Spleen (tissue), 13 donors: ENCODE measurements at regions of chr1 and their contacts with region 1.

Region 1: GRCh38 chr1:19096036-19096833 is 113.8 kb downstream of the UBR4 start:
- DNase-seq: no peak
- H3K4me3 ChIP-seq: no peak overlapping the region
- H3K27ac ChIP-seq: no peak overlapping the region
- H3K4me1 ChIP-seq: peaks cover 0 to 7% (median 0%) of the 10 kb centered on the region in 6 donors
- H3K27me3 ChIP-seq: no peaks in the 10 kb centered on the region
- CTCF ChIP-seq: peak in 9 of 11 experiments; percentile 16 to 60 (median 42)
- POLR2A ChIP-seq: no peak

Region 2: DNA sequence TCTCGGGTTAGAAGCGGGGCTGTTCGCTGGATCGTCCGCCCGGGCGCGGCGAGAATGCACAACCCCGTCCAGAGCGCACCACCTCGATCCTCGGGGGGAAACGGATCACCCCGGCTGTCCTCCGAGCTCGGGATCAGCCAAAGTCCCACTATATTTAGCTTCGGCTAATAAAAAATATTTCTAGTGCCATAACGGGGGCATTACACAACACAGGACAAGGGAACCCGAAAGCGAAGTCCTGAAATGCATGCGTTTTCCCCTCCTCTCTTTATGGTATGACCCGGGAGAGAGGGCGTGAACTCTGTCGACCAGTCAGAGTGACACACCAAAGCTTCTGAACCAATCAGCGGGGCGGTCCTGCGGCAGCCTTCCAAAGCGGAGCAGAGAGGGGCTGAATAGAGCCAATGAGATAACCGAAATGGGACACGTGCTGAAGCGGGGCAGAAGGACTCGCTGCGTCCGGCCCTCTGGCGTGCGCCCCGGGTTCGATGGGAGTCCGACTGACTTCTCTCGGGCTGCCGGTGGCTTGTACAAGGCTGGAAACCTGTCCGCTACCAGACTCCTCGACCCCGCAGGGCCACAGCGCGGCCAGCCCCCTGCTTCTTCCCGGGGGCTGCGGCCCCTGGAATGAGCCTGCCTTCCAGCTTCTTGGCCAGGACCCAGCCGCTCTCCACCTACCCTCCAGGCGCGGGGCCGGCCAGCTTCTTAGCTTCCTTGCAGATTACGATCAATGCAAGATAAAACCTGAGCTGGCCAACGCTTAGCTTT is 193.5 kb before region 1 on chr1 and contains the start of gene ALDH4A1:
- intact Hi-C with region 1: loop called (anchors 10 kb)
- DNase-seq: peak; percentile 98
- H3K4me3 ChIP-seq: peak within 1 kb of the TSS; percentile 64 to 92 (median 88)
- H3K27ac ChIP-seq: peak within 1 kb of the TSS; percentile 76 to 92 (median 87)
- H3K4me1 ChIP-seq: peaks cover 10 to 64% (median 38%) of the 10 kb centered on the region in 6 donors
- H3K27me3 ChIP-seq: no peaks in the 10 kb centered on the region
- CTCF ChIP-seq: peak in 2 of 11 experiments; percentile 9 to 44
- POLR2A ChIP-seq: no peak
- total RNA-seq, gene ALDH4A1: 5.1 to 11.2 (median 8.3) TPM

Region 3: DNA sequence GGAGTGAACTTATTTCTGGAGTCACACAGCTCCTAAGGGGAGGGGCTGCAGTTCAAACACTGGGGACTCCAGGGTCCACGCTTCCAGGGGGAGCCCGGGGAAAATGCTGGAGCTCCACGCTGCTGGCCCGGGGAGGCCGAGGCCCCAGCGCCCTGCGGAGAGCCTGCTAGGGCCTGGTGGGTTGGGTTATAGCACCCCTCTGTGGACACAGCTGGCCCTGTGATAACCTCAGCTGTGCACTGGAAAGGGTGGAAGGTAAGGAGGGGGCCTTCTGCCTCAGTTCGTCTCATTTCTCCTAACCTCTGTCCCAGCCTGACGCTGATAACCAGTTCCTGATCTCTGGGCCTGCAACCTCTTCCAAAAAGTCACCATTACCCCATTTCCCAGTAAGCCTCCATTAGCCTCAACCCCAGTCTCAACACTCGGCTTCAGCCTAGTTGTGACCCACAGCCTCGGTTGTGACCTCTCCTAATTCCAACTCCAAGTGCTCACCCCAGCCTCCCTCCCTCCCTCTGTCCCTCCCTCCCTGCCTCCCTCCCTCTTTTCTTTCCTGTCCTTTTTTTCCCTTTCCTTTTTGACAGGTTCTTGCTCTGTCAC is 555.0 kb after region 1 on chr1:
- intact Hi-C with region 1: no loop called
- DNase-seq: no peak
- H3K4me3 ChIP-seq: peak overlapping the region in 1 of 8 donors; percentile 13
- H3K27ac ChIP-seq: peak overlapping the region in 6 of 8 donors; percentile 27 to 74 (median 48)
- H3K4me1 ChIP-seq: peaks cover 7 to 60% (median 32%) of the 10 kb centered on the region in 6 donors
- H3K27me3 ChIP-seq: peaks cover 0 to 14% (median 0%) of the 10 kb centered on the region in 7 donors
- CTCF ChIP-seq: peak; percentile 26 to 76 (median 59)
- POLR2A ChIP-seq: no peak